Sciatic nerve (tissue), 2 donors: ENCODE measurements at regions of chr15 and their contacts with region 1.

Region 1: DNA sequence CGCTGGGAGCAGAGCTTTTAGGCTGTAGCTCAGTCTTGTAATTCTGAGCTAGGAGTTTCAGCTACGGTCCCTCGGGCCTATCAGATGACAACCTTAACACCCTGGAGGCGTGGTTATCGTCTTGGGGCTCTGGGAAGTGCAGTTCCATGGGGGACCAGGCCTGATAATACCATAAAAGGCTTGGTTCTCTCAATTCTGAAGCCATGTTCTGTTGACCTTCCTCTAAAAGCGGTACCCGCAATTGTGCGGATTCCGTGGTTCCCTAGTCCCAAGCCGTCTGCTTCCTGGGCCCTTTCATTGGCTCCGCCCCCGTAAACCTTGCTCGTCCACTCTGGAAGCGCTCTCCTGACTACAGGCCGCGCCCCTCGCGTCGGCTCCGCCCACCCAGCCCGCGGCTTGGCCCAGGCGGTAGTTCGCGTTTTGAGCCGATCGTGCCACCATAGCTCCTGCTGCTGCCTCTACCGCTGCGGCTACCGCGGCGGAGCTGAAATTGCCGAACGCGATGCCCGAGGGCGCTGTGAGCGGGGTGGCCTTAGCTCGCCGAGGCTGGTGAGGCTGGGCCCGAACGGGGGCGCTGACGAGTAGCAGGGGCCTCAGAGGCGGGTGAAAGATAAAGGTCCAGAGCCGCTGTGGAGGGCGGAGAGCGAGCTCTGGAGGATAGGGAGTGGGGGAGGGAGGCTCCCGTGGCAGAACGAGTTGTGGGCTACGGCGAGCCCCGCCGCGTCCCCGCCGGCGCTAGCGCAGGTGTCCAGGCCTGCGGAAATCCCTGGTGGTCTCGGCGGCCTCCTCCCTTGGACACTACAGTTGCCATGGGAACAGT is at the start of gene MAPKBP1:
- DNase-seq: peak; percentile 98
- ATAC-seq: peak; percentile 98
- total RNA-seq, gene MAPKBP1: 54.3 TPM

Region 2: DNA sequence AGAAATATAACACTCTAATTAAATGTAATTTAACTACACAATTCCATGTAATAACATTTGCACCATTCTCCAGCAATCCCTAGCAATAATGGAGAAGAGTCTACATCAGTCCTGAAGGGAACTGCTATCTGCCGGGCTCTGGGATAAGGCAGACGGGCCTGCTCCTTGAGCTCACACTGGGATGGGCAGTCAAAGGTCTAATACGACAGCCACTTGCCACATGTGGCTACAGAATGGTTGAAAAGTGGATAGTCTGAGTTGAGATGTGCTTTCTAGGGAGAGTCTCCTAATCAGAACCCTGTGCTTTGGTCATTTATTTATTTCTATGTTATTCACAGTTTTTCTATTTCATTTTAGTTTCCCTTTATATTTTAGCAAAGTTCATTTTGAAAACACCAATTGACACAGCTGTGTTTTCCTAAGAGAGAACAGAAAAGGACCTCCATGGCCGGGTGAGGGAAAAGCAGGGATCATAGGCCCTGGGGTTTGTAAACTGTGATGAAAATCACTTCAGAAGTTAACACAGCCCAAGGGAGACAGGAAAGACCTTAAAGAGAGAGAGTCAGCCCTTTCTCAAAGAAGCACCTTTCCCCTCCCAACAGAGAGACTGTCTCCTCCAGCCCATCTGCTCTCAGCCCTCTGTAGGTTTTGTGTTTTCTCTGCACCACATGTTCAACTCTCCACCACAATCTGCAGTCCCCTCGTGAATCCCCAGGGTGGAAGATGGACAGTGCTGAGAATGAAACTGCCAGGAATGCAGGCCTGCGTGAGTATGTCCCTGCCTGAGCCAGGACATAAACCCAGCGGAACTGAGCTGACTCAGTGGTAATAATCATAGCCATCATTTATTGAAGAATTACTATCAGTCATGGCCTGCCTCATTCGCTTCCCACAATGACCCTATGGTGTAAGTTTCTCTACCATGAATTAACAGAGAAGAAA is 2003.3 kb before region 1 on chr15:
- intact Hi-C with region 1: loop called (anchors 10 kb)
- DNase-seq: no peak
- ATAC-seq: peak; percentile 92

Region 3: GRCh38 chr15:41806291-41807181 is 32.3 kb after region 1 on chr15:
- intact Hi-C with region 1: loop called (anchors 2 kb)
- DNase-seq: no peak
- ATAC-seq: no peak

Region 4: GRCh38 chr15:42033214-42033873 is 259.1 kb after region 1 on chr15:
- intact Hi-C with region 1: no loop called
- DNase-seq: no peak
- ATAC-seq: no peak